CD4-positive, alpha-beta memory T cell (primary cell): ENCODE measurements at regions of chr17 and their contacts with region 1.

Region 1: DNA sequence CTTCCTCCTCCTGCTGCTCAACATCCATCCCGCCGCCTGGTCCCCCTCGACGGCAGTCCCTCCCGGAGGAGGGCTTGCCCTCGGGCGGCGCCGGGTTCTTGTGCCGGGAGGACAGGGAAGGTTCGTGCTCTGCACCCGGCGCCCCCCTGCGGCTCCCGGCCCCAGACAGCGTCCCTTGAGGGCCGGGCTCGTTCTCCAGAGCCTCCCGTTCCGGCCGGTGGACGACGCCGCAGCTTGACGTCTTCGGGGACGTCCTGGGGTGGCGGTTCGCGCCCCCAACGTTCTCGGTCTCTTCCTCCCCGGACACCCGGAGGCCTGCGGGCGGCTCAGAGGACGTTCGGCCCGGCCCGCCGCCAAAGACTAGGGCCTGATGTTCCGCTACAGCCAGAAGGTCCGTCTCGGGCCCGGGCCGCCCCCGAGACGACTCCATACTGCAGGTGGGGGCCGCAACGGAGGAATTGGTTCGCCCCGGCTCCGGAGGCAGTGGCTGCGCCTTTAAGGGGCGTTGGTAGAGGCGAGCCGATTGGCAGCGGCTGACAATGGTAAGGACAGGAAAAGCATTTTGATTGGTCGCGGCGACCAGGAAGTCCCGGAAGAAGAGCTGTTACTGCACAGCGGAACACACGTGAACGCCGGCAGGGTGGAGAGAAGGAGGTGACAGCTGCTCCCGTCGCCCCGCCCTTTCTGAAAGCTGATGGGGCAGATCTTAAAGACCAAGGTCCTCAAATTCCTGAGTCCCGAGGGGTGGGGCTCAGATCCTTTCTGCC is at the start of gene BORCS6:
- DNase-seq: peak; percentile 93 to 98 (median 96)
- H3K4me3 ChIP-seq: peak within 1 kb of the TSS; percentile 76 to 100
- H3K4me3 Mint-ChIP-seq: peak within 1 kb of the TSS in 5 of 8 donors; percentile 13 to 92 (median 41)
- H3K27ac ChIP-seq: peak within 1 kb of the TSS; percentile 82
- H3K27ac Mint-ChIP-seq: peak within 1 kb of the TSS in 5 of 7 donors; percentile 78 to 94 (median 91)
- H3K4me1 ChIP-seq: peaks cover 44% of the 10 kb centered on the region
- H3K4me1 Mint-ChIP-seq: peaks cover 7 to 15% (median 13%) of the 10 kb centered on the region in 4 donors
- H3K27me3 ChIP-seq: no peaks in the 10 kb centered on the region
- H3K27me3 Mint-ChIP-seq: no peaks in the 10 kb centered on the region
- total RNA-seq, gene BORCS6: 19.2 to 19.4 TPM

Region 2: GRCh38 chr17:8091033-8091687 is 98.7 kb before region 1 on chr17:
- CTCF ChIA-PET with region 1: interaction called, 11 read pairs
- POLR2A ChIA-PET with region 1: interaction called, 5 read pairs
- intact Hi-C with region 1: no loop called
- DNase-seq: no peak
- H3K4me3 ChIP-seq: no peak overlapping the region
- H3K4me3 Mint-ChIP-seq: peak overlapping the region in 1 of 8 donors; percentile 26
- H3K27ac ChIP-seq: no peak overlapping the region
- H3K27ac Mint-ChIP-seq: no peak overlapping the region
- H3K4me1 ChIP-seq: peaks cover 12% of the 10 kb centered on the region
- H3K4me1 Mint-ChIP-seq: peaks cover 5 to 16% (median 12%) of the 10 kb centered on the region in 4 donors
- H3K27me3 ChIP-seq: no peaks in the 10 kb centered on the region
- H3K27me3 Mint-ChIP-seq: peaks cover 17 to 21% of the 10 kb centered on the region in 2 donors

Region 3: DNA sequence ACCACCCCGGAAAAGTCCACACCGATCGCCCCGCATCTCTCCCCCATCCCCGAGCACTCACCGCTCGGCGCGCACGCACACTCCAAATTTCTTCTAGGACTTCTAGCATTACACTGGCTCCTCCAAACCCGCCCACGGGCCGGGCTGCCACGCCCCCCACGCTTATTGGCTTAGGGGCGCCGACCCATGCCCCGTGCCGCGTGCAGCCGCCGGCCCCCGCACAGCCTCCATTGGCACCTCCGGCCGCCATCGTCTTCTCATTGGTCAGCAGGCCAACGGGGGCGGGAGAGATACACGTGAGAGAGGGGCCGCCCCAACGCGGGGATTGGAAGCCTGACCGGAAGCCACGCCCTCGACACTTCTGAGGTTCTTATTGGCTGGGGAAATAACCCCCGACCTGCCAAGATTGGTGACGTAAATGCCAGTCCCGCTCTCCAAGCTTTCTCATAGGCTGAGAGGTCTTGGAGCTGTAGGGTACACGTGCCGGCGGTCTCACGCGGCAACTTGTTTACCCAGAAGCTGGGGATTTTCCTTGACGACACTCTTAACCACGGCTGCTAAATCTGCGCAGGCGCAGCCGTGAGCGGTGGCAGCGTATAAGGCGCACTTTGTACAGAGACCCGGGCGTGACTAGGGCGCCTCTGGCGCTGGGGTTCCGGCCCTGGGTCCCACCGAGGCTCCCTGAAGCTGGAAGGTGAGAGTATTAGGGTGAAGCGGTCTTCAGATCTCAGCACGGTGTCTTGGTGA is 33.5 kb before region 1 on chr17:
- CTCF ChIA-PET with region 1: interaction called, 13 read pairs
- POLR2A ChIA-PET with region 1: interaction called, 1,074 read pairs
- intact Hi-C with region 1: loop called (anchors 1 kb)
- DNase-seq: peak; percentile 100
- H3K4me3 ChIP-seq: peak overlapping the region; percentile 90
- H3K4me3 Mint-ChIP-seq: no peak overlapping the region
- H3K27ac ChIP-seq: peak overlapping the region; percentile 100
- H3K27ac Mint-ChIP-seq: no peak overlapping the region
- H3K4me1 ChIP-seq: peaks cover 85% of the 10 kb centered on the region
- H3K4me1 Mint-ChIP-seq: peaks cover 38 to 71% (median 55%) of the 10 kb centered on the region in 4 donors
- H3K27me3 ChIP-seq: no peaks in the 10 kb centered on the region
- H3K27me3 Mint-ChIP-seq: no peaks in the 10 kb centered on the region

Region 4: DNA sequence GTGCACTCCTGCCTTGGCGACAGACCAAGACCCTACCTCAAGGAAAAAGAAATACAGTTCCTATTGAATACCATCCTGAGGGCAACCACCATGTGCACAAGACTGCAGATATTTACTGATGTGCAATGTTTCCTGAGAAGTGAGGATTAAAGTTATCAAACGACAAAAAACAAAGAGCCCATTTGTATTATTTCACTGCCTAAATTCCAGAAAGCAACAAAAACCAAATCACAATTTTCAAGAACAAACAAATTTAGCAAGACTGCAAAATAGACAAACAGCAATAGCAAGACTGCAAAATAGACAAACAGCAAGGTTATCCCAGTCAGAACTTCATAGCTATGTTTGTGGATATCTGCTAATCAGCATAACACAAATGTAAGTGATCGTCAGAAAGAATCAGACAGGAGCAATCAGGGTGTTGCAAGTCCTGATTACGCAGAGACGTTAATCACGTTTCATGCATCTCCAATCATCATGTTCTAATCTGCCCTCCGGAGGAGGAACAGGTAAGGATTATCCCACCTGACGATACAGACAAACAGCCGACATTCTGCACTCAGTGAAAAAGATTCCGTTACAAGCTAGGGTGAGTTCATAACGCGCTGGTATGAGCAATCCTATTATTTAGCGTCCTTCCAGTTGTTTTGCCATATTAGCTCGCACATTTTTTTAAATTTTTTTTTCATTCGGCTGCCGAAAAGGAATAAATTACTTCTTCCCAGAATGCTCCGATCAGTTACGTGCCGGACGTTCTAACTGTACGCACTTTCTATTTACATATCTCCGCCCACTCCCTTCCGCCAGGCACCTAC is 16.6 kb before region 1 on chr17:
- CTCF ChIA-PET with region 1: interaction called, 7 read pairs
- POLR2A ChIA-PET with region 1: interaction called, 186 read pairs
- intact Hi-C with region 1: loop called (anchors 1 kb)
- DNase-seq: peak; percentile 91 to 94 (median 92)
- H3K4me3 ChIP-seq: peak overlapping the region; percentile 12 to 52
- H3K4me3 Mint-ChIP-seq: peak overlapping the region; percentile 84 to 94 (median 90)
- H3K27ac ChIP-seq: peak overlapping the region; percentile 99
- H3K27ac Mint-ChIP-seq: peak overlapping the region; percentile 98 to 100 (median 100)
- H3K4me1 ChIP-seq: peaks cover 45% of the 10 kb centered on the region
- H3K4me1 Mint-ChIP-seq: peaks cover 30 to 61% (median 43%) of the 10 kb centered on the region in 4 donors
- H3K27me3 ChIP-seq: no peaks in the 10 kb centered on the region
- H3K27me3 Mint-ChIP-seq: no peaks in the 10 kb centered on the region

Region 5: DNA sequence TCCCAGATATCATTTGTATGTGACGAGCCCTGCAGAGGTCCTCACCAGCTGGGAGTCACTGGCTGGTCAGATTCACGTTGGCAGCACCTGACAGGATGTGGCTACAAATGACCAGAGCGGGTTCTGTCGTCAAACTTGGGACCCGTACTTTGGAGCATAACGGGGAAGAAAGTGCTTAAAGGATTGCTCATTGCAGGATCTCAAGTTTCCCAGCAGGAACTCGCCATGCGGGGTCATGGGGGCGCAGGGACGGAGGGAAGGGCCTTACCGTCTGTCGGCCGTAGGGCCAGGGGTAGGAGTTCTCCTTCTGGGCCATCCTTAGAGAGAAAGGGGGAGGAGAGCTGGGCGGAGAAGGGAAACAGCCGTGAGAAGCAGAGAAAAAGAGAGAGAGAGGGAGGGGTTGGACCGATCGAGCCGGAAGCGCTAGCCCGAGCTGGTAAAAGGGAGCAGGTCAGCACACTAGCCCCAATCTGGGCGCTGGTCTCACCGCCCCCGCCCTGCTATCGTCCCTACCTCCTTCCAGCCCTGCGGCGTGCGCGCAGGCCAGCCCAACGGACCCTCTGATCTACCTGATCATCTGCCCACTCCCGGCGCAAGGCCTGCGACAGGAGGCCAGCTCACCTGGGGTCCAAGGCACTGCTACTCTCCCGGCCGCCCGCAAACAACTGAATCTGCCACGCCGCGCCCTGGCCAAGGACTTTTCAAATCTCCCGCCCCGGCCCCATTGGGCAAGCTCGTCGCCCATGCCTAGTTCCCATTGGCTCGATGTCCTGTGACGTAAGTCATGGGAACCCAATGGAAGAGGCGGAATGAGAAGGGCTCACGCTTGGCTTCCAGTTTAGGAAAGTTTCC is 20.2 kb after region 1 on chr17 and contains the start of gene AURKB:
- CTCF ChIA-PET with region 1: interaction called, 4 read pairs
- POLR2A ChIA-PET with region 1: interaction called, 54 read pairs
- intact Hi-C with region 1: loop called (anchors 1 kb)
- DNase-seq: peak; percentile 90 to 98 (median 90)
- H3K4me3 ChIP-seq: peak within 1 kb of the TSS; percentile 71 to 83
- H3K4me3 Mint-ChIP-seq: peak within 1 kb of the TSS; percentile 85 to 96 (median 92)
- H3K27ac ChIP-seq: peak within 1 kb of the TSS; percentile 69
- H3K27ac Mint-ChIP-seq: peak within 1 kb of the TSS; percentile 82 to 95 (median 94)
- H3K4me1 ChIP-seq: peaks cover 15% of the 10 kb centered on the region
- H3K4me1 Mint-ChIP-seq: peaks cover 13 to 21% (median 17%) of the 10 kb centered on the region in 4 donors
- H3K27me3 ChIP-seq: no peaks in the 10 kb centered on the region
- H3K27me3 Mint-ChIP-seq: no peaks in the 10 kb centered on the region
- total RNA-seq, gene AURKB: 0.67 to 0.83 TPM

Region 6: GRCh38 chr17:8294814-8295316 is 105.0 kb after region 1 on chr17:
- CTCF ChIA-PET with region 1: interaction called, 19 read pairs
- POLR2A ChIA-PET with region 1: interaction called, 48 read pairs
- intact Hi-C with region 1: loop called (anchors 1 kb)
- DNase-seq: no peak
- H3K4me3 ChIP-seq: peak overlapping the region; percentile 78 to 92
- H3K4me3 Mint-ChIP-seq: peak overlapping the region; percentile 91 to 97 (median 94)
- H3K27ac ChIP-seq: peak overlapping the region; percentile 73
- H3K27ac Mint-ChIP-seq: peak overlapping the region; percentile 92 to 98 (median 96)
- H3K4me1 ChIP-seq: peaks cover 26% of the 10 kb centered on the region
- H3K4me1 Mint-ChIP-seq: peaks cover 18 to 50% (median 29%) of the 10 kb centered on the region in 4 donors
- H3K27me3 ChIP-seq: no peaks in the 10 kb centered on the region
- H3K27me3 Mint-ChIP-seq: no peaks in the 10 kb centered on the region

Region 7: GRCh38 chr17:8320990-8321389 is 131.1 kb after region 1 on chr17:
- CTCF ChIA-PET with region 1: no interaction called
- POLR2A ChIA-PET with region 1: no interaction called
- intact Hi-C with region 1: no loop called
- DNase-seq: no peak
- H3K4me3 ChIP-seq: no peak overlapping the region
- H3K4me3 Mint-ChIP-seq: no peak overlapping the region
- H3K27ac ChIP-seq: no peak overlapping the region
- H3K27ac Mint-ChIP-seq: no peak overlapping the region
- H3K4me1 ChIP-seq: peaks cover under 1% of the 10 kb centered on the region
- H3K4me1 Mint-ChIP-seq: peaks cover 2 to 4% (median 3%) of the 10 kb centered on the region in 4 donors
- H3K27me3 ChIP-seq: peaks cover 4% of the 10 kb centered on the region
- H3K27me3 Mint-ChIP-seq: peaks cover 13 to 20% of the 10 kb centered on the region in 2 donors

Region 8: DNA sequence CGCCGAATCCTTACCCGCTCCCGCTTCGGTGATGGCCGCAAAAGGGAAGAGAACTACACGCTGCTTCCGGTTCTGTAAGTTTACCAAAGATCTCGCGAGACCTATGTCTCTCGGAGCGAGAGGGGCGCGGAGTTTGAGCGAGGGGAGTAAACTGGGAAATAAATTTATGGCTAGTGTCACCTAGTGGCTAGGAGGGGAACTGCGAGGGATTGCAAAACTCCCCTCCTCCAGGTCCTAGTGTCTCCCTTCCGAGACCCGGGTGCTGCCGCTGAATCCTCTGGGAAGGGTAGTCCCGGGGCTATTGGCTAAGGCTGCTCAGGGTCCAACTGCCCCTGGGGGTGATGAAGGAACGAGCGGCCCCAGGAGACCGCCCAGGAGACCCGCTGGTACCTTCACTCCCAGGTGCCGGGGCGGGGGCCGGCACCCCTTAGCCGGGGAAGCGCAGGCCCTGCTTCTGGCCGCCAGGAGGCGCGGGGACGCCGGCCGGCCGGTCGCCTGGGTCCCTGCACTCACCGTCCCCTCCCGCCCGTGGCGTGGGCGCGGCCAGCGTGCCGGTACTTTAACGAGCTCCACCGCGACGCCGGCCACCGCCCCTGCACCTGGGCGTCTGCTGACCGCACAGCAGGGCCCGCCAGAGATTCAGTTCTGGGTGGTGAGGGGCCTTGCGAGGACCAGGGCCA is 193.4 kb after region 1 on chr17 and contains the start of gene RPL26:
- CTCF ChIA-PET with region 1: no interaction called
- POLR2A ChIA-PET with region 1: no interaction called
- intact Hi-C with region 1: loop called (anchors 2 kb)
- DNase-seq: peak; percentile 96 to 98 (median 97)
- H3K4me3 ChIP-seq: peak within 1 kb of the TSS; percentile 74 to 95
- H3K4me3 Mint-ChIP-seq: peak within 1 kb of the TSS; percentile 95 to 99 (median 97)
- H3K27ac ChIP-seq: peak within 1 kb of the TSS; percentile 77
- H3K27ac Mint-ChIP-seq: peak within 1 kb of the TSS; percentile 94 to 97 (median 96)
- H3K4me1 ChIP-seq: peaks cover 49% of the 10 kb centered on the region
- H3K4me1 Mint-ChIP-seq: peaks cover 36 to 82% (median 54%) of the 10 kb centered on the region in 4 donors
- H3K27me3 ChIP-seq: no peaks in the 10 kb centered on the region
- H3K27me3 Mint-ChIP-seq: no peaks in the 10 kb centered on the region
- total RNA-seq, gene RPL26: 2,761 to 2,878 TPM